A549 (cell line): ENCODE measurements at regions of chr10 and their contacts with region 1.

Region 1: GRCh38 chr10:98170249-98171117 is 36.0 kb downstream of the R3HCC1L start:
- DNase-seq: peak; percentile 44 to 61
- ATAC-seq: peak; percentile 95 to 97
- H3K4me3 ChIP-seq: no peak overlapping the region
- H3K27ac ChIP-seq: no peak overlapping the region
- H3K4me1 ChIP-seq: no peaks in the 10 kb centered on the region
- CTCF ChIP-seq: peak; percentile 66
- EP300 ChIP-seq: no peak
- POLR2A ChIP-seq: no peak
- RAD21 ChIP-seq: peak; percentile 56 to 58

Region 2: GRCh38 chr10:98154076-98154475 is 16.4 kb before region 1 on chr10:
- CTCF ChIA-PET with region 1: interaction called, 13 read pairs
- POLR2A ChIA-PET with region 1: no interaction called
- DNase-seq: no peak
- ATAC-seq: 0 out of 6 replicates have a peak, but pooled peaks of 1 of the 2 experiments have one; percentile 34
- H3K4me3 ChIP-seq: no peak overlapping the region
- H3K27ac ChIP-seq: no peak overlapping the region
- H3K4me1 ChIP-seq: no peaks in the 10 kb centered on the region
- CTCF ChIP-seq: no peak
- EP300 ChIP-seq: no peak
- POLR2A ChIP-seq: no peak
- RAD21 ChIP-seq: no peak

Region 3: GRCh38 chr10:98186681-98187080 is 16.2 kb after region 1 on chr10:
- CTCF ChIA-PET with region 1: interaction called, 13 read pairs
- POLR2A ChIA-PET with region 1: no interaction called
- DNase-seq: no peak
- ATAC-seq: no peak
- H3K4me3 ChIP-seq: no peak overlapping the region
- H3K27ac ChIP-seq: no peak overlapping the region
- H3K4me1 ChIP-seq: no peaks in the 10 kb centered on the region
- CTCF ChIP-seq: no peak
- EP300 ChIP-seq: no peak
- POLR2A ChIP-seq: no peak
- RAD21 ChIP-seq: no peak

Region 4: GRCh38 chr10:98295907-98296306 is 125.4 kb after region 1 on chr10:
- CTCF ChIA-PET with region 1: interaction called, 10 read pairs
- POLR2A ChIA-PET with region 1: no interaction called
- DNase-seq: no peak
- ATAC-seq: no peak
- H3K4me3 ChIP-seq: no peak overlapping the region
- H3K27ac ChIP-seq: no peak overlapping the region
- H3K4me1 ChIP-seq: no peaks in the 10 kb centered on the region
- CTCF ChIP-seq: no peak
- EP300 ChIP-seq: no peak
- POLR2A ChIP-seq: no peak
- RAD21 ChIP-seq: no peak

Region 5: DNA sequence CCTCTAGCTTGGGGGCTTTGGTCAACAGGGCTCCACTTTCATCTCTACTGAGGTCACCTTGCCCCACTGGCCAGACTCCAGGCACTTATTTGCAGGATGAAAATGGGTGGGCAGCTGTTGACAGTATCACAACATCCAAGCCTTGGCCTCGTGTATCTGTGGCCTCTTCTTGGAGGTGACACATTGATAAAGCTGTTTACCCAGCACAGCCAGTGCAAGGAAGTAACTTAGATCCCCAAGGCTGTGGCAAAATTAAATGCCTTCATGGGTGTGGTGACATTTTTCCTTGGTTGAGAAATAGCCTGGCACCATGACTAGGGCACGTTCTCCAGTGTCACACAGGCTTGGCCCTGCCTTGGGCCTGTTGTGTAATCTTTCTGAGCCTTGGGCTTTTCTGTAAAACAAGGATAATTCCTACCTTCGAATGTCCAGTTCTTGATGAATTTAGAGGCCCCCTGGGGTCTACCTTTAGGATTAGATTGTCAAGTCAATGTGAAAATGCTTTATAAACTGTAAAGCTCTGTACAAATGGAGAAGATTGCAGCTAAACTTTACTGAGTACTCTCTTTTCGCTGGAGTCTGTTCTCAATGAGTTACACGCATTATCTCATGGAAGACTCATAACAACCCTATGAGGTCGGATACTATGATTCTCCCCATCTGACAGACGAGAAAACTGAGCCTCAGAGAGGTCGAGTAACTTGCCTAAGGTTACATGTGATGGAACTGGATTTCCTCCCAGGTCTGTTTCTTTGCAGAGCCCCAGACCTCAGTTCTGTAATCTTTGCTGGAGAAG is 144.2 kb after region 1 on chr10:
- CTCF ChIA-PET with region 1: interaction called, 45 read pairs
- POLR2A ChIA-PET with region 1: no interaction called
- DNase-seq: peak in 1 of 2 experiments; percentile 48
- ATAC-seq: no peak
- H3K4me3 ChIP-seq: no peak overlapping the region
- H3K27ac ChIP-seq: no peak overlapping the region
- H3K4me1 ChIP-seq: no peaks in the 10 kb centered on the region
- CTCF ChIP-seq: no peak
- EP300 ChIP-seq: no peak
- POLR2A ChIP-seq: no peak
- RAD21 ChIP-seq: no peak

Region 6: GRCh38 chr10:98536551-98536950 is 366.1 kb after region 1 on chr10:
- CTCF ChIA-PET with region 1: no interaction called
- POLR2A ChIA-PET with region 1: no interaction called
- DNase-seq: peak; percentile 5 to 64
- ATAC-seq: peak; percentile 89 to 93
- H3K4me3 ChIP-seq: no peak overlapping the region
- H3K27ac ChIP-seq: 0 out of 6 replicates have a peak overlapping the region, but pooled peaks of 1 of the 2 experiments have one; percentile 9
- H3K4me1 ChIP-seq: 0 out of 3 replicates have a peak, but pooled peaks cover 8% of the 10 kb centered on the region
- CTCF ChIP-seq: no peak
- EP300 ChIP-seq: no peak
- POLR2A ChIP-seq: no peak
- RAD21 ChIP-seq: no peak